Calu3 (cell line): ENCODE measurements at regions of chr2 and their contacts with region 1.

Region 1: GRCh38 chr2:102240640-102241370 is 54.0 kb downstream of the IL1RL2 start:
- DNase-seq: peak; percentile 91
- H3K4me3 Mint-ChIP-seq: no peak overlapping the region
- H3K27ac Mint-ChIP-seq: no peak overlapping the region
- H3K4me1 Mint-ChIP-seq: peaks cover 33% of the 10 kb centered on the region
- H3K27me3 Mint-ChIP-seq: no peaks in the 10 kb centered on the region
- CTCF ChIP-seq: peak; percentile 95

Region 2: GRCh38 chr2:101883863-101884262 is 356.9 kb before region 1 on chr2:
- CTCF ChIA-PET with region 1: interaction called, 13 read pairs
- intact Hi-C with region 1: loop called (anchors 2 kb)
- DNase-seq: peak; percentile 28
- H3K4me3 Mint-ChIP-seq: no peak overlapping the region
- H3K27ac Mint-ChIP-seq: no peak overlapping the region
- H3K4me1 Mint-ChIP-seq: no peaks in the 10 kb centered on the region
- H3K27me3 Mint-ChIP-seq: no peaks in the 10 kb centered on the region
- CTCF ChIP-seq: peak; percentile 44

Region 3: DNA sequence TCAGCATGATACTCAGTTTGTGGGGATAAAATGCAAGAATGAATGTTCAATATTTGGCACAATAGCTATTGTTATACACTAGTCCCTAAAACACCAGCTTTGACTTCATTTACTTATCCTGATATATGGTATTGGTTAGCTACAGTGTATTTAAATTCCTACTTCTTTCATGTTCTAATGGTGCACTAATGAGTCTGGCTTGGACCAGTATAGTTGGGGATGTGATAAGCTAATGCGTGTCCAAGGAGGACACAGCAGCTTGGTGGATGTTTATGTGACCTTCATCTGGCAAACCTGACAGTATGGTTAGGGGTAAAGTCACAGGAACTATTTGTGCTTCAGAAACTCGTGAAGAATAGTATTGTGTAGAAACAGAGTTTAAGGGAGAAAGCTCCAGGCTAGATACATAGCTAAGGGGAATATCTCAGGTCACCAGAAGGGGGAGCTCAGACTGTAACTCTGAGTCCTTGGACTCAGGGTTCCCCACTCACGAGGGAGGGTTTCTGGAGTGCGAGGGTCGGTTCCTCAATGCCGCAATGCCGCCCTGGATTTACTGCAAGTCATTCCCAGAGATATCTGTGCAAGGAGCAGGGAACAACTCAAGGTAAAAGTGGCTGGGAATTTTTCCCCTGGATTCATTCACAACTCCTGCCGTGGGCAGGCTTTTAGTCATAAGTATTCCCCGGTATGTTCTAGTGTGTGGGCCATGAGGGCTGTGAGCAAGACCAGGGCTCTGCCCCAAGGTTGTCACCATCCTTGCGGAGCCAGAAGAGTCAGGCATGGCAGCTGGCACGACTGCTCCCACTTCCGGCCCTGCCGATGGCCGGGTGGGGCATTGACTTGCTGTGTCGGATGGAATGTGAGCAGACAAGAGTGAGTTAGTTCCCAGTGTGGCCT is 234.6 kb before region 1 on chr2:
- CTCF ChIA-PET with region 1: interaction called, 39 read pairs
- intact Hi-C with region 1: loop called (anchors 5 kb)
- DNase-seq: peak; percentile 56
- H3K4me3 Mint-ChIP-seq: no peak overlapping the region
- H3K27ac Mint-ChIP-seq: no peak overlapping the region
- H3K4me1 Mint-ChIP-seq: no peaks in the 10 kb centered on the region
- H3K27me3 Mint-ChIP-seq: no peaks in the 10 kb centered on the region
- CTCF ChIP-seq: peak; percentile 56

Region 4: GRCh38 chr2:102020596-102021181 is 220.1 kb before region 1 on chr2:
- CTCF ChIA-PET with region 1: interaction called, 33 read pairs
- intact Hi-C with region 1: loop called (anchors 1 kb)
- DNase-seq: peak; percentile 90
- H3K4me3 Mint-ChIP-seq: no peak overlapping the region
- H3K27ac Mint-ChIP-seq: no peak overlapping the region
- H3K4me1 Mint-ChIP-seq: peaks cover 14% of the 10 kb centered on the region
- H3K27me3 Mint-ChIP-seq: no peaks in the 10 kb centered on the region
- CTCF ChIP-seq: peak; percentile 95

Region 5: GRCh38 chr2:102033031-102033749 is 207.6 kb before region 1 on chr2:
- CTCF ChIA-PET with region 1: interaction called, 12 read pairs
- intact Hi-C with region 1: no loop called
- DNase-seq: peak; percentile 83
- H3K4me3 Mint-ChIP-seq: peak overlapping the region; percentile 33
- H3K27ac Mint-ChIP-seq: peak overlapping the region; percentile 84
- H3K4me1 Mint-ChIP-seq: peaks cover 18% of the 10 kb centered on the region
- H3K27me3 Mint-ChIP-seq: no peaks in the 10 kb centered on the region
- CTCF ChIP-seq: no peak

Region 6: GRCh38 chr2:102166189-102166845 is 74.5 kb before region 1 on chr2:
- CTCF ChIA-PET with region 1: interaction called, 23 read pairs
- intact Hi-C with region 1: no loop called
- DNase-seq: peak; percentile 34
- H3K4me3 Mint-ChIP-seq: no peak overlapping the region
- H3K27ac Mint-ChIP-seq: no peak overlapping the region
- H3K4me1 Mint-ChIP-seq: no peaks in the 10 kb centered on the region
- H3K27me3 Mint-ChIP-seq: no peaks in the 10 kb centered on the region
- CTCF ChIP-seq: peak; percentile 33

Region 7: GRCh38 chr2:102187496-102188150 is 53.2 kb before region 1 on chr2:
- CTCF ChIA-PET with region 1: interaction called, 10 read pairs
- intact Hi-C with region 1: loop called (anchors 2 kb)
- DNase-seq: no peak
- H3K4me3 Mint-ChIP-seq: peak overlapping the region; percentile 49
- H3K27ac Mint-ChIP-seq: no peak overlapping the region
- H3K4me1 Mint-ChIP-seq: peaks cover 13% of the 10 kb centered on the region
- H3K27me3 Mint-ChIP-seq: no peaks in the 10 kb centered on the region
- CTCF ChIP-seq: no peak

Region 8: GRCh38 chr2:102271844-102272243 is 31.0 kb after region 1 on chr2:
- CTCF ChIA-PET with region 1: no interaction called
- intact Hi-C with region 1: no loop called
- DNase-seq: no peak
- H3K4me3 Mint-ChIP-seq: no peak overlapping the region
- H3K27ac Mint-ChIP-seq: no peak overlapping the region
- H3K4me1 Mint-ChIP-seq: no peaks in the 10 kb centered on the region
- H3K27me3 Mint-ChIP-seq: peaks cover 41% of the 10 kb centered on the region
- CTCF ChIP-seq: no peak